ENCODE measurements at regions of chr1 and their contacts with region 1.

Region 1: DNA sequence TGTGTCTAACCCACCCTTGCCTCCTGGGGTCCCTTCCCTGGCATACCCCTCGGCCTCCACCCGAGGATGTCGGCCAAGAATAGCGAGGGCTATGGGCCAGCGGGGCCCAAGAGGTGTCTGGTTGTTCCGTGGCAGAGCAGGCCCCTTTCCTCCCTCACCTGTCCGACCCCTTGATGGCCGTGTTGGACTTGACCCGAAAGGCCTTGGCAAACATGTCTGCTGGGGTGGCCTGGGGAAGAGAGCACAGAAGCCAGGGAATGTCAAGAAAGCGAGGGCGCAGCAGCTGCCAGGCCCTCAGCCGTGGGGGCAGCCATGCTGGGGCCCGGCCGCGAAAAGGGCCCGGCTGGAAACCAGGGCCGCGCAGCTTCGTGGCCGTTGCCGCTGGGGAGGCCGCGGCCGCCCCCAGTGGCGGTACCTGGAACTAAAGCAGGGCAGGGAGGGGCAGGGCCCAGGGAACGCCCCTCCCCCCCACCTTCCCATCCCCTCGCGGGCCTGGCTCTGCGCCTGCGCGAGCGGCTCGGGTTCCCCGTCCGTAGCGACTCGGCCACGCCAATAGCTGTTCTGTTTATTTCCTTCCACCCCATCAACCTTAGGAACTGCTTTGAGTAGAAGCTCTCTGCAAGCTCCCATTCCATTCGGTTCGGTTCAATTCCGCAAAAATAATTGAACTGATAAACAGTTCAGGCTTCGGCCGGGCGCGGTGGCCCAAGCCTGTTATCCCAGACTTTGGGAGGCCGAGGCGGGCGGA is at the start of gene EIF2D:
- DNase-seq: peak; percentile 87 to 97 (median 94)
- ATAC-seq: peak; percentile 98
- H3K4me3 Mint-ChIP-seq: peak within 1 kb of the TSS; percentile 87 to 97 (median 93)
- H3K27ac Mint-ChIP-seq: peak within 1 kb of the TSS; percentile 93 to 99 (median 96)
- H3K4me1 Mint-ChIP-seq: peaks cover 12 to 24% (median 20%) of the 10 kb centered on the region in 4 donors
- H3K27me3 Mint-ChIP-seq: peaks cover 0 to 2% (median 0%) of the 10 kb centered on the region in 5 donors
- polyA plus RNA-seq, gene EIF2D: 38.9 to 46.0 (median 39.1) TPM

Region 2: GRCh38 chr1:206551986-206552326 is 60.3 kb before region 1 on chr1:
- POLR2A ChIA-PET with region 1: interaction called, 17 read pairs
- DNase-seq: peak in 9 of 10 donors; percentile 66 to 88 (median 79)
- ATAC-seq: peak; percentile 89 to 95
- H3K4me3 Mint-ChIP-seq: peak overlapping the region in 9 of 10 donors; percentile 65 to 83 (median 78)
- H3K27ac Mint-ChIP-seq: peak overlapping the region; percentile 74 to 99 (median 94)
- H3K4me1 Mint-ChIP-seq: peaks cover 29 to 68% (median 66%) of the 10 kb centered on the region in 4 donors
- H3K27me3 Mint-ChIP-seq: no peaks in the 10 kb centered on the region